ENCODE measurements at regions of chr4 and their contacts with region 1.

Region 1: GRCh38 chr4:153486281-153487151 is 20.4 kb downstream of the TMEM131L start:
- DNase-seq: peak; percentile 76
- H3K4me3 ChIP-seq: no peak overlapping the region
- H3K27ac ChIP-seq: peak overlapping the region; percentile 89
- H3K27me3 ChIP-seq: no peaks in the 10 kb centered on the region
- CTCF ChIP-seq: no peak

Region 2: GRCh38 chr4:153074936-153075630 is 411.4 kb before region 1 on chr4:
- CTCF ChIA-PET with region 1: no interaction called
- POLR2A ChIA-PET with region 1: no interaction called
- DNase-seq: no peak
- H3K4me3 ChIP-seq: no peak overlapping the region
- H3K27ac ChIP-seq: no peak overlapping the region
- H3K27me3 ChIP-seq: peaks cover 8% of the 10 kb centered on the region
- CTCF ChIP-seq: no peak

Region 3: GRCh38 chr4:153497988-153498967 is 11.8 kb after region 1 on chr4:
- CTCF ChIA-PET with region 1: interaction called, 13 read pairs
- POLR2A ChIA-PET with region 1: interaction called, 4 read pairs
- DNase-seq: peak; percentile 66
- H3K4me3 ChIP-seq: peak overlapping the region; percentile 25
- H3K27ac ChIP-seq: peak overlapping the region; percentile 84
- H3K27me3 ChIP-seq: no peaks in the 10 kb centered on the region
- CTCF ChIP-seq: no peak